Activated B cell treated with CpG ODN at 0.5 μM for 24 hours (primary cell): ENCODE measurements at regions of chr1 and their contacts with region 1.

Region 1: GRCh38 chr1:8409106-8409505 is 91.2 kb downstream of the SLC45A1 start:
- DNase-seq: no peak
- ATAC-seq: peak; percentile 78
- H3K4me3 Mint-ChIP-seq: peak overlapping the region; percentile 0
- H3K27ac Mint-ChIP-seq: peak overlapping the region; percentile 54
- H3K4me1 Mint-ChIP-seq: peaks cover 44% of the 10 kb centered on the region
- H3K27me3 Mint-ChIP-seq: no peaks in the 10 kb centered on the region
- CTCF ChIP-seq: no peak

Region 2: GRCh38 chr1:8142955-8143629 is 266.0 kb before region 1 on chr1:
- CTCF ChIA-PET with region 1: no interaction called
- POLR2A ChIA-PET with region 1: no interaction called
- intact Hi-C with region 1: no loop called
- DNase-seq: no peak
- ATAC-seq: no peak
- H3K4me3 Mint-ChIP-seq: no peak overlapping the region
- H3K27ac Mint-ChIP-seq: no peak overlapping the region
- H3K4me1 Mint-ChIP-seq: no peaks in the 10 kb centered on the region
- H3K27me3 Mint-ChIP-seq: peaks cover 22% of the 10 kb centered on the region
- CTCF ChIP-seq: no peak

Region 3: DNA sequence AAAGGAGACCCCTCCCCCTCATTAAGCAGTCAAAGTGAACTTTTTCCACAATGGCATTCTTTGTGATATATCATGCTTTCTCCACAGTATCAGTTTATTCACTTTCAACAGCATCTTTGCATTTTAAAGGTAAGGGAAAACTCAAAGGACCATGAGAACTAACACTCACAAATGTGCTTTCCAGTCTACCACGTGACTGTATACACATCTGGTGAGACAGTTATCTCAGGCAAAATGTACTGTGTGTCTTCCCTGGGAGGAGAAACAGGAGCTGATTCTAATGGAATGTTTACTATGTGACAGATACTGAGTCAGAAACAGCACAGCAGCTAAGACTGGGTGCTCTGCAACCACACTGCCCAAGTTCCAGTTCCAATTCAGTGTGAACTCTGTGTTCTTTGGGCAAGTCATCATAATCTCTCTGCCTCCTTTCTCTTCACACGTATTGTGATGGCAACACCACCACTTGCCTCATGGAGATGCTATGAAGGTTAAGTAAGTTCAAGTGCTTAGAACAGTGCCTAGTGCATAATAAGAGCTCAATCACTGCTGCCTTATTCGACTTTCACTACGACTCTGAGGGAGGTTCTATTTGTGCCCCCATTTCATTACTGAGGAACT is 12.2 kb before region 1 on chr1:
- CTCF ChIA-PET with region 1: interaction called, 12 read pairs
- POLR2A ChIA-PET with region 1: interaction called, 3 read pairs
- intact Hi-C with region 1: no loop called
- DNase-seq: no peak
- ATAC-seq: peak; percentile 4
- H3K4me3 Mint-ChIP-seq: peak overlapping the region; percentile 24
- H3K27ac Mint-ChIP-seq: peak overlapping the region; percentile 82
- H3K4me1 Mint-ChIP-seq: peaks cover 72% of the 10 kb centered on the region
- H3K27me3 Mint-ChIP-seq: no peaks in the 10 kb centered on the region
- CTCF ChIP-seq: no peak

Region 4: DNA sequence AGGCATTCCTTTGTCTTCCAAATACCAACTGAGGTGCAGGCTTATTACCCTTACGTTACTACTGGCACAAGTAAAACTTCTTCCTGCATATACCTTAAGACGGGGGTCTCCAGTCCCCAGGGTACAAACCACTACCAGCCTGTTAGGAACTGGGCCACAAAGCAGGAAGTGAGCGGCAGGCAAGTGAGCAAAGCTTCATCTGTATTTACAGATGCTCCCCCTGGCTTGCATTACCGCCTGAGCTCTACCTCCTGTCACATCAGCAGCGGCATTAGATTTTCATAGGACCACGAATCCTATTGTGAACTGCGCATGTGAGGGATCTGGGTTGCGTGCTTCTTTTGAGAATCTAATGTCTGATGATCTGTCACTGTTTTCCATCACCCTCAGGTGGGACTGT is 21.9 kb after region 1 on chr1:
- CTCF ChIA-PET with region 1: interaction called, 25 read pairs
- POLR2A ChIA-PET with region 1: interaction called, 7 read pairs
- intact Hi-C with region 1: no loop called
- DNase-seq: no peak
- ATAC-seq: peak; percentile 46
- H3K4me3 Mint-ChIP-seq: peak overlapping the region; percentile 39
- H3K27ac Mint-ChIP-seq: peak overlapping the region; percentile 84
- H3K4me1 Mint-ChIP-seq: peaks cover 90% of the 10 kb centered on the region
- H3K27me3 Mint-ChIP-seq: no peaks in the 10 kb centered on the region
- CTCF ChIP-seq: no peak

Region 5: GRCh38 chr1:8439015-8439702 is 30.1 kb after region 1 on chr1:
- CTCF ChIA-PET with region 1: interaction called, 3 read pairs
- POLR2A ChIA-PET with region 1: no interaction called
- intact Hi-C with region 1: loop called (anchors 2 kb)
- DNase-seq: peak; percentile 49
- ATAC-seq: peak; percentile 94
- H3K4me3 Mint-ChIP-seq: peak overlapping the region; percentile 26
- H3K27ac Mint-ChIP-seq: peak overlapping the region; percentile 90
- H3K4me1 Mint-ChIP-seq: peaks cover 53% of the 10 kb centered on the region
- H3K27me3 Mint-ChIP-seq: no peaks in the 10 kb centered on the region
- CTCF ChIP-seq: no peak

Region 6: DNA sequence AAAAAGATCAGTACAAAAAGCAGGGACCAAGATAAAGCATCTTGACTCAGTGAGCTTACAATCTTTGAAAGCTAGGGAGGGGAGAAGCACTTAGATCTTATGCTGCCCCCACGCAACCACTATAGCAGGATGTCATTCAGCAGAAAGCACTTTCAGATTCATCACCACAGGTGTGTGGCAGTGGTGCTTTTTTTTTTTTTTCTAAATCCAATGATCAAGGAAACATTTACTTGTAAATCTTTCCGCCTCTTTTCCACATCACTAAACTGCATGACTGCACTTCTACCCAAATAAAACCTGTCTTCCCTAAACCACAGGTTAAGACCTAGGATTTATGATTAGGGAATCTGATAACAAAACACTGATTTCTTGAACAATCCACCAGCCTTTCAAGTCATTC is 63.6 kb after region 1 on chr1:
- CTCF ChIA-PET with region 1: interaction called, 7 read pairs
- POLR2A ChIA-PET with region 1: no interaction called
- intact Hi-C with region 1: loop called (anchors 1 kb)
- DNase-seq: no peak
- ATAC-seq: peak; percentile 58
- H3K4me3 Mint-ChIP-seq: no peak overlapping the region
- H3K27ac Mint-ChIP-seq: no peak overlapping the region
- H3K4me1 Mint-ChIP-seq: peaks cover 39% of the 10 kb centered on the region
- H3K27me3 Mint-ChIP-seq: no peaks in the 10 kb centered on the region
- CTCF ChIP-seq: no peak

Region 7: DNA sequence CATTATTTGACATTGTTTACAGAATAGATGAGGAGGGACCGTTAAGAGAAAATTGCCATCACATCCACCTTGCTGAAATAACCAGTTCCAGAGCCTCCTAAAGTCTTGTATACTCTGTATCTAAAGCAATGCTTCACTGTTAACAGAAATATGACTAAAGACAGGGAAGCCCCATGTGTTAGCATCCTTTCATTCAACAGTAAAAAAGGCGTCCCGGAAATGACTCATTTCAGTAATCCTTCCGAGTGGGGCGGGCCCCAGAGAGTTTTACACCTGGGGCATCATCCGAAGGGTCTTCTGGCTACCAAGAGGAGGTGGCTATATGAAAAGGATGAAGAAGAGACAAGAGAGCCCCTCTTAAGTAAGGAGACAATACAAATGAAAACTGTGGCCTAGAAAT is 136.0 kb after region 1 on chr1:
- CTCF ChIA-PET with region 1: interaction called, 3 read pairs
- POLR2A ChIA-PET with region 1: no interaction called
- intact Hi-C with region 1: loop called (anchors 5 kb)
- DNase-seq: no peak
- ATAC-seq: peak; percentile 56
- H3K4me3 Mint-ChIP-seq: no peak overlapping the region
- H3K27ac Mint-ChIP-seq: peak overlapping the region; percentile 25
- H3K4me1 Mint-ChIP-seq: peaks cover 27% of the 10 kb centered on the region
- H3K27me3 Mint-ChIP-seq: no peaks in the 10 kb centered on the region
- CTCF ChIP-seq: no peak

Region 8: DNA sequence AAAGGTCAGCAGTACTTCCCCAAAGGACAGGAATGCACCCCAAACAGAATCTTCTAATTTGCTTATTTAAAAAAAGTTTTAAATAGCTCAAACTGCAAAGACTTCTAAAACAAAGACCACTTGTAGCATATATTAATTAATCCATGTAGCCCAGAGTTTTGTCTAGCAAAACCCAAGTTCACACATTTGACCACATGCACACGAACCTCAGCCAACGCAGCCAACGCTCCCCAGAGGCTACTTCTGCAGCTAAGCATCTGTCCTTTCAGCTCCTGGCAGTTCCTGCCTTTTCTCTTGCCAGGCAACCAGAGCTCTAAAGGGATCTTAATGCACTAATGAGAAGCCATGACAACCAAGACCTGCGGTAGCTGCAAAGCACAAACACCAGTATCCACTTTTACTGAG is 318.7 kb after region 1 on chr1:
- CTCF ChIA-PET with region 1: interaction called, 6 read pairs
- POLR2A ChIA-PET with region 1: no interaction called
- intact Hi-C with region 1: loop called (anchors 1 kb)
- DNase-seq: no peak
- ATAC-seq: no peak
- H3K4me3 Mint-ChIP-seq: no peak overlapping the region
- H3K27ac Mint-ChIP-seq: no peak overlapping the region
- H3K4me1 Mint-ChIP-seq: peaks cover 18% of the 10 kb centered on the region
- H3K27me3 Mint-ChIP-seq: no peaks in the 10 kb centered on the region
- CTCF ChIP-seq: no peak